ENCODE measurements at regions of chr19 and their contacts with region 1.

Region 1: DNA sequence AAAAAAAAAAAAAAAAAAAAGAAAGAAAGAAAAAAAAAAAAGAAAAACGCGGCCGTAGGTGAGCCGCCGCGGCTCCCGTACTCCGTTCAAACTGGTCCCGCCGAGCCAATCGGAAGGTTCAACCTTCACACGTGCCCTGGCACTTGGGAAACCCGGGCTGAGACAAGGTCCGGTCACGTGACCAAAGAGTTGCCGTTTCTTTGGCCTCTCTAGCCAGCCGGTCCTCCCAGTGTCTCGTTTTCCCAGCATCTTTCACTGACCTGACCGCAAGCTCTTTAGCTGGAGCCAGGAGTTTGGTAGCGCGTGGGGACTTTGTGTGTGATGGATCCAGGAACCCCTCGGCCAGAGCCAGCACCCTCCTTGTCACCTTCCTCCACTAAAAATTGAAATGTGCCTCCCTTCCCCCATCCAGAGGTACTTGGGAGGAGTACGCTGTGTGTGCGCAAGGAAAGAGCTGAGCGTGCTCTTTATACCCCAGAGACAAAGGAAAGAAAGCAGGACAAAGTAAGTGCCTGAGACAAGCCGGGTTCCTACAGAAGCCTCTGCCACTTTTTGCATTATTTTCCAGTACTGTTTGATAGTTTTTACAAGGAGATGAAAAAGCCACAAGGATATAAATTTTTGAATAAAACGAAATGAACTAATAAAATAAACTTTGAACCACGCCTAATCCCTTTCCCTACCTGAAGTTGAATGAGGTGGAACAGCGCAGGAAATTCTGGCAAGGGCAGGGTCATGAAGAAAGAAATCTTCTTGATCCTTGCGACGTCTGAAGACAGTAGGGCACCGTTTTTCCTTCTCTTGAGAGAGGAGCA is 959 bp downstream of the TNPO2 start:
- DNase-seq: peak; percentile 66 to 97 (median 91)
- ATAC-seq: peak; percentile 96
- H3K4me3 ChIP-seq: peak overlapping the region; percentile 91
- H3K4me3 Mint-ChIP-seq: peak overlapping the region; percentile 86 to 96 (median 93)
- H3K27ac ChIP-seq: peak overlapping the region; percentile 85
- H3K27ac Mint-ChIP-seq: peak overlapping the region; percentile 89 to 97 (median 95)
- H3K4me1 ChIP-seq: peaks cover 11 to 16% of the 10 kb centered on the region in 2 donors
- H3K4me1 Mint-ChIP-seq: peaks cover 20 to 43% (median 38%) of the 10 kb centered on the region in 7 donors
- H3K27me3 ChIP-seq: no peaks in the 10 kb centered on the region
- H3K27me3 Mint-ChIP-seq: peaks cover 0 to 2% (median 0%) of the 10 kb centered on the region in 5 donors

Region 2: DNA sequence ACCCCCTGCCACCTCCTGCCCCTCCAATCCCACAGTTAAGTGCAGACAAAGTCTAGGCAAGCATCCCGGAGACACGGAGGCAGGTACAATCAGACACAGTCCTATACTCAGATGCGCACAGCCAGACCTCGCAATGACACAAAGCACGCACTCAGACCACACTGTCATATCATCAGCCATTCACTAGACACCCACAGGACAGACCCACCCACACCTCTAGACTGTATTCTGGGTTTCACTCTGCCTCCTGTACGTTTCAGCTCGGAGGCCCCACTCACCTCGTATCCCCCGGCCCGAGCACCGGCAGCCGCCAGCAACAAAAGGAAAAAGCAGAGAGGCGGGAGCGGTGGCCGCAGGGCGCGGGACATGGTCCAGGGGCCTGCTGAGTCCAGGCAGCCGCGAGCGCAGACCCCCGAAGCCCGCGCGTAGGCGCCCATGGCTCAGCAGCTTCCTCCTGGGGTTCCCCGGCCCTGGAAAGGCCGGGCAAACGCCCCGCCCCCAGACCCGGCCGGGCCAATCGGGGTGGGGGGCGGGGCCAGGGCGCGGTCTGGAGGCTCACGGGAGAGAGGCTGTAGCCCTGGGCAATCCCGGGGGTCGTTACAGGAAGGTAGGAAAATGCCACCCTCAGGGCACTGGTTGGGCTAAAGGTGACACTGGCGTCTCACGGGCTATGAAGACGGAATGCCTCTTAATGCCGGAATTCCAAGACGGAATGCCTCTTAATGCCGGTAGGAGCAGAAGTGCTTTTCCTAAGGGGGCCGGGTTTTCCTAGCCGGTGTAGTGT is 56.3 kb before region 1 on chr19 and contains the starts of genes MAN2B1 and WDR83:
- CTCF ChIA-PET with region 1: no interaction called
- POLR2A ChIA-PET with region 1: no interaction called
- intact Hi-C with region 1: loop called in 1 of 2 experiments (anchors 5 kb)
- DNase-seq: peak; percentile 56 to 86 (median 72)
- ATAC-seq: peak; percentile 82
- H3K4me3 ChIP-seq: peak within 1 kb of the TSS; percentile 92
- H3K4me3 Mint-ChIP-seq: peak within 1 kb of the TSS; percentile 90 to 100 (median 98)
- H3K27ac ChIP-seq: peak within 1 kb of the TSS; percentile 99
- H3K27ac Mint-ChIP-seq: peak within 1 kb of the TSS; percentile 77 to 100 (median 91)
- H3K4me1 ChIP-seq: peaks cover 38% of the 10 kb centered on the region in 2 donors
- H3K4me1 Mint-ChIP-seq: peaks cover 22 to 69% (median 45%) of the 10 kb centered on the region in 7 donors
- H3K27me3 ChIP-seq: no peaks in the 10 kb centered on the region
- H3K27me3 Mint-ChIP-seq: no peaks in the 10 kb centered on the region
- total RNA-seq, gene MAN2B1: 105 to 215 (median 138) TPM
- total RNA-seq, gene WDR83: 7.8 to 18.6 (median 14.7) TPM

Region 3: GRCh38 chr19:12696366-12697335 is 26.1 kb before region 1 on chr19 and contains the start of gene FBXW9:
- CTCF ChIA-PET with region 1: interaction called, 3 read pairs
- POLR2A ChIA-PET with region 1: interaction called, 21 read pairs
- intact Hi-C with region 1: loop called (anchors 1 kb)
- DNase-seq: peak; percentile 88 to 97 (median 95)
- ATAC-seq: peak; percentile 97
- H3K4me3 ChIP-seq: peak within 1 kb of the TSS; percentile 98
- H3K4me3 Mint-ChIP-seq: peak within 1 kb of the TSS; percentile 86 to 95 (median 91)
- H3K27ac ChIP-seq: peak within 1 kb of the TSS; percentile 82
- H3K27ac Mint-ChIP-seq: peak within 1 kb of the TSS; percentile 90 to 97 (median 97)
- H3K4me1 ChIP-seq: peaks cover 9 to 11% of the 10 kb centered on the region in 2 donors
- H3K4me1 Mint-ChIP-seq: peaks cover 0 to 15% (median 12%) of the 10 kb centered on the region in 7 donors
- H3K27me3 ChIP-seq: no peaks in the 10 kb centered on the region
- H3K27me3 Mint-ChIP-seq: no peaks in the 10 kb centered on the region
- total RNA-seq, gene FBXW9: 2.5 to 8.6 (median 4.3) TPM

Region 4: DNA sequence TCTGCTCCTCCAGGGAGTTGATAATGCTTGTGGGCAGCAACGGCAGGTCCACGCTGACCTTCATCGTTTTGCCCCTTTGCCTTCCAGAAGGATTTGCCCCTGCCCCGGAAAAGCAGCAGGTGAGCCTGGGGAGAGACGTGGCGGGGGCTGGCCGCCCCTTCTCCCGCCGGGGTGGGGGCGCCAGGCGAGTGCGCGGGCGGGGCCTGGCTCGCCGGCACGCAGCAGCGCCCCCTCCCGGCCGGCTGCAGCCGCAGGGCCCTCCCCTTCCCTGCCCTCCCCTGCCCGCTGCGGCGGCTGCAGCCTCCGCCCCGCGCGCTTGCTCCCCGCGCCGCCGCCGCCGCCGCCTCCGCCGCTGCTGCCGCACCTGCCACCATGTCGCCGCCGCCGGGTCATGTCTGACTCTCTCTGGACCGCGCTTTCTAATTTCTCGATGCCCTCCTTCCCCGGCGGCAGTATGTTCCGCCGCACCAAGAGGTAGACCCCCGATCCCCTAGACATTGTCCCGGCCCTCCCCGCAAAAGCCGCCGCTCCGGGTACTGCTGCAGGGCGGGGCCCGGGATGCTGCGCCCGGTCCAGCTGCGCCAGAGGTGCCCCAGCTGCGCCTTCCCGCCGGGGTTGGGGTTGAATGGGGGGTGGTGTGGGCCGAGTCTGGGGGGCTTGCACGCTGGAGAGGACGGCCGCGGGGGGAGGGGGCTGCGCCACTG is 115.6 kb after region 1 on chr19 and contains the start of gene MAST1:
- CTCF ChIA-PET with region 1: no interaction called
- POLR2A ChIA-PET with region 1: no interaction called
- intact Hi-C with region 1: no loop called
- DNase-seq: peak in 7 of 9 donors; percentile 37 to 78 (median 52)
- ATAC-seq: peak; percentile 84
- H3K4me3 ChIP-seq: no peak within 1 kb of the TSS
- H3K4me3 Mint-ChIP-seq: peak within 1 kb of the TSS; percentile 58 to 79 (median 72)
- H3K27ac ChIP-seq: no peak within 1 kb of the TSS
- H3K27ac Mint-ChIP-seq: peak within 1 kb of the TSS in 3 of 9 donors; percentile 12 to 30 (median 24)
- H3K4me1 ChIP-seq: peaks cover 8 to 11% of the 10 kb centered on the region in 2 donors
- H3K4me1 Mint-ChIP-seq: peaks cover 0 to 46% (median 29%) of the 10 kb centered on the region in 7 donors
- H3K27me3 ChIP-seq: peaks cover 16 to 33% of the 10 kb centered on the region in 2 donors
- H3K27me3 Mint-ChIP-seq: peaks cover 69 to 74% (median 73%) of the 10 kb centered on the region in 5 donors
- total RNA-seq, gene MAST1: 0.51 to 0.93 (median 0.71) TPM in 4 of 5 experiments, not detected in the other

Measured in naive thymus-derived CD4-positive, alpha-beta T cell (primary cell).